CD14-positive monocyte (primary cell): ENCODE measurements at regions of chr10 and their contacts with region 1.

Region 1: DNA sequence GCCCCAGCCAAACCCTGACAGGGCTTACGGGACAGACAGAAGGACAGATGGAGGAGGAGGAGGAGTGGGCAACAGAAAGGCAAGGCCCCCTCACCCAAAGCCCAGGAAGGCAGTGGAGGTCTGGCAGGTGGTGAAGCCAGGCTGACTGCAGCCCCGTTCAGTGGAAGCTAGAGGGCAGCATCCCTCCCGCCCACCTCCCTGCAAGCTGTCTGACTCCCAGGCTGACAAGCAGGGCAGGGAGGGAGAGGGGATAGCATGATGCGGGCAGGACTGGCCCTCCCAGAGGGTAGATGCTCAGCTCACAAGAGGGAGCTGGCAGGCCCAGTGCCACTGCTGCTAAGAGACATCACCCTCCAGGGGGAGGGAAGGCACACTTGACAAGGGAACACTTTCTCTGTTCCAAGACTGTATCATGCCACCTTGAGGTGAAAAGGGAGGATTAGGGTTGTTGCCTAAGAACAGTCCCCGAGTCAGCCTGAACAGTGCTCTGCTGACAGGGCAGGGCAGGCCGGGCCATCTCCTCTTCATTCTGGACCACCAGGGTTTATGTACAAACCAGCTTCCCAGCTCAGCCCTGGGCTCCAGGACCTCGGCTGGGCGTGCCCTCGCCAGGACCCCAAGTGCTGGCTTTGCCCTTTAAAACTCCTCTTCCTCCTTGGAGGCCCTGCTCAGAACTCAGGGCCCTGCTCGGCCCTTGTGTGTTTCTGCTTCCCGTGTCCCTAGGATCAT is 61.8 kb downstream of the RASGEF1A start:
- DNase-seq: peak; percentile 38 to 57 (median 44)
- H3K4me3 ChIP-seq: no peak overlapping the region
- H3K4me3 Mint-ChIP-seq: no peak overlapping the region
- H3K27ac ChIP-seq: no peak overlapping the region
- H3K27ac Mint-ChIP-seq: peak overlapping the region in 1 of 7 donors; percentile 76
- H3K4me1 ChIP-seq: peaks cover 19 to 28% of the 10 kb centered on the region in 2 donors
- H3K4me1 Mint-ChIP-seq: peaks cover 16% of the 10 kb centered on the region
- H3K27me3 ChIP-seq: no peaks in the 10 kb centered on the region
- H3K27me3 Mint-ChIP-seq: peaks cover 0 to 4% (median 0%) of the 10 kb centered on the region in 3 donors
- CTCF ChIP-seq: peak; percentile 85

Region 2: GRCh38 chr10:43160046-43160918 is 44.8 kb before region 1 on chr10:
- intact Hi-C with region 1: no loop called
- DNase-seq: peak; percentile 84 to 91 (median 91)
- H3K4me3 ChIP-seq: peak overlapping the region in 1 of 3 experiments; percentile 44
- H3K4me3 Mint-ChIP-seq: peak overlapping the region; percentile 28 to 79
- H3K27ac ChIP-seq: peak overlapping the region; percentile 59 to 86
- H3K27ac Mint-ChIP-seq: peak overlapping the region; percentile 91 to 100 (median 98)
- H3K4me1 ChIP-seq: peaks cover 28 to 56% of the 10 kb centered on the region in 2 donors
- H3K4me1 Mint-ChIP-seq: peaks cover 50% of the 10 kb centered on the region
- H3K27me3 ChIP-seq: no peaks in the 10 kb centered on the region
- H3K27me3 Mint-ChIP-seq: peaks cover 0 to 2% (median 1%) of the 10 kb centered on the region in 3 donors
- CTCF ChIP-seq: no peak

Region 3: DNA sequence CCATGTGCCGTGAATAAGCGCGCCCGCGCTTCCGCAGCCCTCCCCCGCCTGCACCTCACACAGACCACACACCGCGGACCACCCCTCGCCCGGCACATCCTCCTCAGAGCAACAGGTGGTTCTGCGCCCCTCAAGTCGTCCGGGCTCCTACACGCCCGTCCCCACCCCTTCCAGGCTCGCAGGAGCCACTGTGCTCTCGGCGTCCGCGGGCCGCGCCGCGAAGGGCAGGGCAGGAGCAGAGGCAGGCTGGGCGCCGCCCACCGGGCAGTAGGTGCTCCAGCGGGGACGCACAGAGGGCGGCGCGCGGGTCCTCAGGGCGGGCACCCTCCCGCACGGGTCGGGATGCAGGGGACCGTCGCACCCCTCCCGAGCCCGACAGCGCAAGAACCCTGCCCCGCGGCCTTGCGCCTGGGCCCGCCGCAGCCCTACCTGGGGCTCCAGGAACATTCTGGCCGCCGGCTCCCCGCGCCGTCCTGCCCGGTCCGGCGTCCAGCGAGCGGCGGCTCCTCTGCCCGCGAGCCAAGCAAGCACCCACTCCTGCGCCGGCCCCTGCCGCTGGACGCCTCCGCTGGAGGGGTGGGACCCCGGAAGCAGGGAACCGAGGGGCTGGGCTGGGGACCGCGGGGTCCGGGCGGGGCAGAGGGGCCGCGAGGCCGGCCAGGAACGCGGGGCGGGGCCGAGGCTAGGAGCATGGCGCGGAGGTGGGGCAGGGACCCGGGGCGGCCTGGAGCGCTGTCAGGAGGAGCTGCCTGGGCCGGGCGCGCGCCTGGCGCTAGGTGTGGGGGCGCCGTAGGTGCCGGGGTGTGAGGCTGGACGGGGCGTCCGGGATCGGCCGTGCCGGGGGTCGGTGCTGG is 24.3 kb after region 1 on chr10:
- intact Hi-C with region 1: no loop called
- DNase-seq: no peak
- H3K4me3 ChIP-seq: peak overlapping the region in 1 of 3 experiments; percentile 39
- H3K4me3 Mint-ChIP-seq: peak overlapping the region; percentile 51 to 85
- H3K27ac ChIP-seq: no peak overlapping the region
- H3K27ac Mint-ChIP-seq: no peak overlapping the region
- H3K4me1 ChIP-seq: peaks cover 4 to 9% of the 10 kb centered on the region in 2 donors
- H3K4me1 Mint-ChIP-seq: peaks cover 13% of the 10 kb centered on the region
- H3K27me3 ChIP-seq: peaks cover 2 to 40% of the 10 kb centered on the region in 2 donors
- H3K27me3 Mint-ChIP-seq: peaks cover 32 to 64% (median 57%) of the 10 kb centered on the region in 3 donors
- CTCF ChIP-seq: no peak

Region 4: DNA sequence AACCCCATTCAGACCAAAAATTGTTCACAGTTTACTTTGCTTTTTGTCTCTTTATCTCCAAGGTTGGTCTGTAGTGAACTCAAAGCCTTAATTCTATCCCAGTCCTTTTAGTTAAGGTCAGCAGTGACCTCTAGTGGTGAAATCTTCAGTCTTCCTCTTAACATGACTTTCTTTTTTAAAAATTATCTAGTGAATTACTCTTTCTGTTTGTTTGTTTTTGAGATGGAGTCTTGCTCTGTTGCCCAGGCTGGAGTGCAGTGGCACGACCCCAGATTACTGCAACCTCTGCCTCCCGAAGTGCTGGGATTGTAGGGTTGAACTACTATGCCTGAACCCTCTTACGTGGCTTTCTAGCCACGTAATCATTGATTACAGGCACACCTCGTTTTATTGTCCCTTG is 256.8 kb after region 1 on chr10:
- intact Hi-C with region 1: loop called in 1 of 2 experiments (anchors 10 kb)
- DNase-seq: peak; percentile 66 to 84 (median 73)
- H3K4me3 ChIP-seq: no peak overlapping the region
- H3K4me3 Mint-ChIP-seq: peak overlapping the region in 1 of 2 donors; percentile 42
- H3K27ac ChIP-seq: no peak overlapping the region
- H3K27ac Mint-ChIP-seq: peak overlapping the region in 3 of 7 donors; percentile 50 to 68 (median 65)
- H3K4me1 ChIP-seq: no peaks in the 10 kb centered on the region
- H3K4me1 Mint-ChIP-seq: peaks cover 5% of the 10 kb centered on the region
- H3K27me3 ChIP-seq: no peaks in the 10 kb centered on the region
- H3K27me3 Mint-ChIP-seq: peaks cover 0 to 4% (median 1%) of the 10 kb centered on the region in 3 donors
- CTCF ChIP-seq: peak; percentile 77